Activated T-helper 2 cell treated with anti-CD3 and anti-CD28 coated beads, Interferon-gamma antibody, Interleukin-2, Interleukin-4, amounts not matched to agents 10 μg/mL and 5 μg/mL and 100 μg/mL, durations not matched to agents 14 hours and 24 hours and 36 hours (primary cell): ENCODE measurements at regions of chr13 and their contacts with region 1.

Region 1: DNA sequence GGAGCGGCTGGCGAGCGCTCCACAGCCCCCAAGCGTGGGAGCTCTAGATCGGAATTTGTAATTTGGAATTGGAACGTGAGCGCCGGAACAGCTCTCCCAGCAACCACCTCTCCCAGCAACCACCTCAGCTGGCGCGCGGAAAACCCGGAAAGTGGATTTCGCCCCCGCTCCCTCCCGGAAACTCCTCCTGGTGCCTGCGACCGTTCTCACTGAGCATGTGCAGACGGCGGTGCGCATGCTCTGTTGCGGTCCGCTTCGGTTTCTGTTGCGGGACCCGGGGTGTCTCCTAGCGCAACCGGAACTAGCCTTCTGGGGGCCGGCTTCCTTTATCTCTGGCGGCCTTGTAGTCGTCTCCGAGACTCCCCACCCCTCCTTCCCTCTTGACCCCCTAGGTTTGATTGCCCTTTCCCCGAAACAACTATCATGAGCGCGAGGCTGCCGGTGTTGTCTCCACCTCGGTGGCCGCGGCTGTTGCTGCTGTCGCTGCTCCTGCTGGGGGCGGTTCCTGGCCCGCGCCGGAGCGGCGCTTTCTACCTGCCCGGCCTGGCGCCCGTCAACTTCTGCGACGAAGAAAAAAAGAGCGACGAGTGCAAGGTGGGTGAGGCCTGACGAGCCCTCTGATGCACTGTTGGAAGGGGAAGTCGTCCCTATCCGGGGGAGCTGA is at the start of gene TM9SF2:
- DNase-seq: peak; percentile 97
- H3K4me3 Mint-ChIP-seq: peak within 1 kb of the TSS; percentile 89
- H3K27ac Mint-ChIP-seq: peak within 1 kb of the TSS; percentile 86
- H3K4me1 Mint-ChIP-seq: peaks cover 56% of the 10 kb centered on the region
- H3K27me3 Mint-ChIP-seq: no peaks in the 10 kb centered on the region
- total RNA-seq, gene TM9SF2: 77.5 and 78.5 TPM in 2 replicates

Region 2: DNA sequence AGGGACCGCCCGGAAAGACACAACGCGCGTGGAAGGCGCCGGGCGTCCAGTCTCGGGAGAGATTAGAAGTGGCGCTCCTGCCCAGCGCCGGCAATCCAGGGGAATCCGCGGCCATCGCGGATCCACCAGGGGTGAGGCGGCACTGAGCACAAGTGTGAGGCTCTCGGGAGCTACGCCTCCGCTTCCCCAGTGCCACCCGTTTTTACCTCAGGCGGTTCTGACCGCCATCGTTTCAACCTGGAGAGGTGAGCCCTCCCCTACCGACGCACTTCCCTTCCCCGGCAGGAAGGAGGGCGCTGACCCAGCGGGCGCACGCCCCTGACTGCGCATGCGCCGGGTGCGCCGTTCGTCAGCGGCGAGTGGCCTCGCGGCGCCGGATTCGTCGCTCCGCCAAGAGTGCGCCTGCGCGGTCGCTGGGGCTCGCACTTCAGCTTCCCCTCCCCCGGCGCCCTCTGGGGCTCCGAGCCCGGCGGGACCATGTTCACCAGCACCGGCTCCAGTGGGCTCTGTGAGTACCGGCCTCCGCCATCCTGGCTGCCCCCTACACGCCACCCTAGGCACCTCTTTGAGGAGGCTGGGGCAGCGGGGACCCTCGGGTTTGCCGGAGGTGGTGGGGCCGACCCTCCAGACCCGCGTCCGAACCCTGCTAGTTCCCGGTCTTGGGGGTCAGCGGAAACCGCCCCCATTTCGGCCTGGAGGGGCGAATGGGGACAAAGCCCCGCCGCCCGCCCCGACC is 300.7 kb before region 1 on chr13 and contains the start of gene UBAC2:
- intact Hi-C with region 1: loop called (anchors 10 kb)
- DNase-seq: peak; percentile 96
- H3K4me3 Mint-ChIP-seq: peak within 1 kb of the TSS; percentile 97
- H3K27ac Mint-ChIP-seq: peak within 1 kb of the TSS; percentile 93
- H3K4me1 Mint-ChIP-seq: peaks cover 53% of the 10 kb centered on the region
- H3K27me3 Mint-ChIP-seq: no peaks in the 10 kb centered on the region
- total RNA-seq, gene UBAC2: 53.4 and 55.1 TPM in 2 replicates

Region 3: DNA sequence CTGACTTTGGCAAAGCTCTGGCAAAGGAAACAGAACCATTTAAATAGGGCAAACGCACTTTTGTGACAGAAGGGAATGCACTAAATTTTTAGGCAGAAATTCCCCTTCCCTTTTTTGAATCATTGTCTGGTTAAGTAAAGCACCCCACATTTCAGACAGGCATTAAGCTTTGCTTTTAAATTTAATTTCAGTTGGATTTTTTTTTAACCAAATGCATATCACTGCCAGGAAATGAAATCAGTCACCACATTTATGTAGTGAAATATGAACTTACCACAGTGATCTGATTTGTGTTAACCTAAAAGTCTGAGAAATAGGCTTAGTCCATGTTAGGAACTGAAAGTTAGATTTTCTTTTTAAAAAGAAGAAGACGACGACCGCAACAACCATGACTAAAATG is 204.9 kb before region 1 on chr13:
- intact Hi-C with region 1: loop called (anchors 5 kb)
- DNase-seq: no peak
- H3K4me3 Mint-ChIP-seq: peak overlapping the region; percentile 73
- H3K27ac Mint-ChIP-seq: peak overlapping the region; percentile 87
- H3K4me1 Mint-ChIP-seq: peaks cover 74% of the 10 kb centered on the region
- H3K27me3 Mint-ChIP-seq: no peaks in the 10 kb centered on the region

Region 4: GRCh38 chr13:99442273-99442895 is 58.9 kb before region 1 on chr13:
- intact Hi-C with region 1: loop called (anchors 1 kb)
- DNase-seq: no peak
- H3K4me3 Mint-ChIP-seq: no peak overlapping the region
- H3K27ac Mint-ChIP-seq: no peak overlapping the region
- H3K4me1 Mint-ChIP-seq: peaks cover 20% of the 10 kb centered on the region
- H3K27me3 Mint-ChIP-seq: peaks cover 24% of the 10 kb centered on the region

Region 5: GRCh38 chr13:99464441-99464949 is 36.8 kb before region 1 on chr13:
- intact Hi-C with region 1: loop called (anchors 2 kb)
- DNase-seq: no peak
- H3K4me3 Mint-ChIP-seq: peak overlapping the region; percentile 21
- H3K27ac Mint-ChIP-seq: peak overlapping the region; percentile 87
- H3K4me1 Mint-ChIP-seq: peaks cover 29% of the 10 kb centered on the region
- H3K27me3 Mint-ChIP-seq: peaks cover 8% of the 10 kb centered on the region